Activated B cell treated with CpG ODN at 0.5 μM for 24 hours (primary cell): ENCODE measurements at regions of chr3 and their contacts with region 1.

Region 1: GRCh38 chr3:49120438-49121131 is at the start of gene USP19:
- DNase-seq: peak; percentile 95
- ATAC-seq: peak; percentile 93
- H3K4me3 Mint-ChIP-seq: peak within 1 kb of the TSS; percentile 84
- H3K27ac Mint-ChIP-seq: peak within 1 kb of the TSS; percentile 79
- H3K4me1 Mint-ChIP-seq: peaks cover 17% of the 10 kb centered on the region
- H3K27me3 Mint-ChIP-seq: no peaks in the 10 kb centered on the region
- CTCF ChIP-seq: no peak
- total RNA-seq, gene USP19: 62.0 and 75.3 TPM in 2 replicates

Region 2: GRCh38 chr3:48588230-48588629 is 532.4 kb before region 1 on chr3:
- CTCF ChIA-PET with region 1: no interaction called
- POLR2A ChIA-PET with region 1: no interaction called
- intact Hi-C with region 1: no loop called
- DNase-seq: no peak
- ATAC-seq: no peak
- H3K4me3 Mint-ChIP-seq: no peak overlapping the region
- H3K27ac Mint-ChIP-seq: no peak overlapping the region
- H3K4me1 Mint-ChIP-seq: no peaks in the 10 kb centered on the region
- H3K27me3 Mint-ChIP-seq: peaks cover 37% of the 10 kb centered on the region
- CTCF ChIP-seq: no peak

Region 3: DNA sequence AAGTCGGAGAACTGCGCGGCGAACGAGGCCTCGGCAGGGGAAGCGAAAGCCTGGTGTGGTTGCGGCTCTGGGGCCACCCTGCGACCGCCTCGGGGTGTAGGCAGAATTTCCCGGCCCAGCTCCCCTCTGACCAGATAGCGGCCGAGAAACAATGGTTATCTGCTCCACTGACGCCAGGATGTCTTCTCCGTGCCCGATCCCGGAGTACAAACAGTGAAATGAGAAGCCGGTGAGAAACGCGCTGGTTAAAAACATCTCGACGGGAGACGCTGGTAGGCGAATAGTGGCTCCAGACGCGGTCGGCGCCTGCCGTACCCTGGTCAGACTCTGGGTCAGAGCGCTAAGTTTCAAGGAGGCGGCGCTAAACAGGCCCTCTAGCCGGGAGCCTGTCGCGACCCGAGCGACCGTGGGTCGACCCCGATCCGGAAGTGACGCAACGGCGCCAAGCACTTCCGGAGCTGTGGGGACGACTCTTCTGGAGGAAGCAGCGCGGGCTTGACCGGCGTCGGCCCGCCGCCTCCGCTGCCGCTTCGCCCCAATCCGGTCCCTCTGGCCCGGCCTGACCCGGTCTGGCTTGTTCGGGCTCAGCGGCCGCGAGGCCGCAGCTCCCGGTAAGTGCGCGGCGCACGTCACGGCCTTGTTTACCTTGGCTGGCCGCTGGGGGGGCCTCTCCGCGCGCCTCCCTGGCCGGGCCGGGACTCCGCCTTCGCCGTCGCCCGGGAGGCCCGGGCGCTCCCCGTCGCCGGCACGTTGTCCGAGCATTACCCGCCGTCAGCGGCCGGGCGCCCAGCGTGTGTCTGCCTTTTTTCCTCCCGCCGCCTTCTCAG is 202.0 kb before region 1 on chr3 and contains the start of gene ARIH2:
- CTCF ChIA-PET with region 1: no interaction called
- POLR2A ChIA-PET with region 1: interaction called, 3 read pairs
- intact Hi-C with region 1: loop called (anchors 1 kb)
- DNase-seq: peak; percentile 91
- ATAC-seq: peak; percentile 85
- H3K4me3 Mint-ChIP-seq: peak within 1 kb of the TSS; percentile 99
- H3K27ac Mint-ChIP-seq: peak within 1 kb of the TSS; percentile 98
- H3K4me1 Mint-ChIP-seq: peaks cover 32% of the 10 kb centered on the region
- H3K27me3 Mint-ChIP-seq: no peaks in the 10 kb centered on the region
- CTCF ChIP-seq: no peak
- total RNA-seq, gene ARIH2: 96.6 and 112 TPM in 2 replicates

Region 4: DNA sequence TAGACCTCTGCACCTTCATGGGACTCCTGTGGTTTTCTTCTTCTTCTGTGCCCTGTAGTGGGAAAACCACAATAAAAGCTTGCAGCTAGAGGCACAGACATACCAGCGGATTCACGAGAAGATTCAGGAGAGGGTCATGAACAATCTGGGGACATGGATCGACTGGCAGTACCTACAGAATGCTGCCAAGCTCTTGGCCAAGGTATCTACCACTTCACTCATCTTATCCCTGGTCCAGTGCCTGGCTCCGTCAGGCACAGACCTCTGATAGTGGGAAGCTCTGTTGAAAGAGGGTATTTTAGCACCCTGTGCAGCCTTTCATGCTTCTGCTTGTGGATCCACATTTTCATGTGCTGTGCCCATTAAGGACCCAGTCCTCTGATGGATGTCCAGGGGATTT is 140.3 kb before region 1 on chr3:
- CTCF ChIA-PET with region 1: no interaction called
- POLR2A ChIA-PET with region 1: no interaction called
- intact Hi-C with region 1: no loop called
- DNase-seq: no peak
- ATAC-seq: no peak
- H3K4me3 Mint-ChIP-seq: no peak overlapping the region
- H3K27ac Mint-ChIP-seq: no peak overlapping the region
- H3K4me1 Mint-ChIP-seq: no peaks in the 10 kb centered on the region
- H3K27me3 Mint-ChIP-seq: no peaks in the 10 kb centered on the region
- CTCF ChIP-seq: no peak

Region 5: DNA sequence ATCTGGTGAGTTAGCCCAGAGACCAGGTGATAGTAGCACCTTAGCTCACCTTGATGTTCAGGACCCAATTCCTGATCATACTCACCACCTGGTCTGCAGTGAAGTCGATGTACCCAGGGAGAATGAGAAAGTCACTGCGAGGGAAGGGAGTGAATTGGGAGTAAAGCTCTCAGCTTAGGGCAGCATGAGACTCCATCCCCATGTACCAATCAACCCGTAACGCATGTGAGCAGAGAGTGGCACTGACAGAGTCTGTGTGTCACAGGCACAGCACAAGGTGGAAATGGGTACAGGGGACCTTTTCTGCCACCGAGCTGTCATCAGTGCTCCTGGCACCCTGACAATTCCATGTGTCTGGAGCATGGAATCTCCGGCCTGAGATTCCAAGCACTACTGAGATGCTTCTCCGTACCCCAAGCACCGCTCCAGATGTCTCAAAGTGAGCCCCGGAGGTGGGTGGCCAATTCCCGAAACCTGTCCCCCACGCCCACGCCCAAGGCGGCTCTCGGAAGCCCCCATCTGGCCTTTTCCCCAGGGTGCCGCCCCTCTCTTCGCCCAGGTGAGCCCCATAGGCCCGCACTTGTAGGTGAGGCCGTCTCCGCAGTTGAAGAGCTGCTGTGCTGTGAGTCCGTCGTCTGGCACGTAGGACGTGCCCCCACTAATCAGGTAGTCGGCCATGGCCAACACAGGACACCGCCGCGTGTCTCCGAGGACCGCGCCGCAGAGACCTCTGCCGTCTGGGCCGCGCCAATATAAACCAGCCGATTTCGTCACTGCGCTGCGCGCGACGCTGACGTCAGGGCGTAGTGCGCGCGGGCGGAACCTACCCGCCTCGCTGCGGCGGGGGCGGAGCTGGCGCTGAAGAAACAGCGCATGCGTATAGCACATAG is 91.7 kb before region 1 on chr3 and contains the start of gene IMPDH2:
- CTCF ChIA-PET with region 1: no interaction called
- POLR2A ChIA-PET with region 1: interaction called, 12 read pairs
- intact Hi-C with region 1: no loop called
- DNase-seq: peak; percentile 91
- ATAC-seq: peak; percentile 90
- H3K4me3 Mint-ChIP-seq: peak within 1 kb of the TSS; percentile 93
- H3K27ac Mint-ChIP-seq: peak within 1 kb of the TSS; percentile 94
- H3K4me1 Mint-ChIP-seq: peaks cover 49% of the 10 kb centered on the region
- H3K27me3 Mint-ChIP-seq: no peaks in the 10 kb centered on the region
- CTCF ChIP-seq: no peak
- total RNA-seq, gene IMPDH2: 387 and 414 TPM in 2 replicates

Region 6: DNA sequence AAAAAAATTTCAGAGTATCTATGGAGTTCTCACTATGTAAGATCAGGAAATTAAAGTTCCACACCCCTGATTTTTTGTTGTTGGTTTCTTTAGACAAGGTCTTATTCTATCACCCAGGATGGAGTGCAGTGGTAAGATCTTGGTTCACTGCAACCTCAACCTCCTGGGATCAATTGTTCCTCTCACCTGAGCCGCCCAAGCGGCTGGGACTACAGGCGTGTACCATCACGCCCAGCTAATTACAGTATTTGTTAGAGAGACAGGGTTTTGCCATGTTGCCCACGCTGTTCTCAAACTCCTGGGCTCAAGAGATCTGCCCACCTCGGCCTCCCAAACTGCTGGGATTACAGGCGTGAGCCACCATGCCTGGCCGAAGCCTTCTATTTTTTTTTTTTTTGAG is 39.2 kb before region 1 on chr3:
- CTCF ChIA-PET with region 1: no interaction called
- POLR2A ChIA-PET with region 1: no interaction called
- intact Hi-C with region 1: no loop called
- DNase-seq: no peak
- ATAC-seq: no peak
- H3K4me3 Mint-ChIP-seq: no peak overlapping the region
- H3K27ac Mint-ChIP-seq: no peak overlapping the region
- H3K4me1 Mint-ChIP-seq: peaks cover 12% of the 10 kb centered on the region
- H3K27me3 Mint-ChIP-seq: no peaks in the 10 kb centered on the region
- CTCF ChIP-seq: no peak

Region 7: DNA sequence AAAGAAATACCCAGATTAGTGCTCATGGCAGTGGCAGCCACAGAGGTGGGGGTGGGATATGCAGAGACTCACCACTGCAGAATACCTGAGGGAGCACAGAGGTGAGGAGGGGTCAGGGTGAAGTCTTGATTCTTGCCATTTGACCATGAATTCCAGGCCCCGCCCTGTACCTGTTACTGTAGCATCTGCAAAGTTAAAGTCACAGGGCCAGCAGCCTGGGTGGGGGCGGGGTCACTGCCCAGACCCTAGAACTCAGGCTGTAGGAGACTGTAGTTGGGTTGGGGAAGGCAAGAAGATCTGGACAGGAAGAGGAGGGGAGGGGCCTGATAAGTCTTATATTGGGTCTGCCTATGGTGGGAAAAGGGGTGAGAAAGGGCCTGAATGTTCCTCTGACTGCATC is 31.0 kb after region 1 on chr3:
- CTCF ChIA-PET with region 1: no interaction called
- POLR2A ChIA-PET with region 1: no interaction called
- intact Hi-C with region 1: no loop called
- DNase-seq: no peak
- ATAC-seq: no peak
- H3K4me3 Mint-ChIP-seq: no peak overlapping the region
- H3K27ac Mint-ChIP-seq: no peak overlapping the region
- H3K4me1 Mint-ChIP-seq: no peaks in the 10 kb centered on the region
- H3K27me3 Mint-ChIP-seq: no peaks in the 10 kb centered on the region
- CTCF ChIP-seq: no peak

Region 8: GRCh38 chr3:49165771-49166751 is 45.5 kb after region 1 on chr3 and contains the start of gene CCDC71:
- CTCF ChIA-PET with region 1: no interaction called
- POLR2A ChIA-PET with region 1: interaction called, 6 read pairs
- intact Hi-C with region 1: loop called (anchors 1 kb)
- DNase-seq: peak; percentile 74
- ATAC-seq: peak; percentile 83
- H3K4me3 Mint-ChIP-seq: peak within 1 kb of the TSS; percentile 92
- H3K27ac Mint-ChIP-seq: peak within 1 kb of the TSS; percentile 84
- H3K4me1 Mint-ChIP-seq: peaks cover 26% of the 10 kb centered on the region
- H3K27me3 Mint-ChIP-seq: peaks cover 2% of the 10 kb centered on the region
- CTCF ChIP-seq: no peak
- total RNA-seq, gene CCDC71: 28.3 and 28.9 TPM in 2 replicates

Region 9: DNA sequence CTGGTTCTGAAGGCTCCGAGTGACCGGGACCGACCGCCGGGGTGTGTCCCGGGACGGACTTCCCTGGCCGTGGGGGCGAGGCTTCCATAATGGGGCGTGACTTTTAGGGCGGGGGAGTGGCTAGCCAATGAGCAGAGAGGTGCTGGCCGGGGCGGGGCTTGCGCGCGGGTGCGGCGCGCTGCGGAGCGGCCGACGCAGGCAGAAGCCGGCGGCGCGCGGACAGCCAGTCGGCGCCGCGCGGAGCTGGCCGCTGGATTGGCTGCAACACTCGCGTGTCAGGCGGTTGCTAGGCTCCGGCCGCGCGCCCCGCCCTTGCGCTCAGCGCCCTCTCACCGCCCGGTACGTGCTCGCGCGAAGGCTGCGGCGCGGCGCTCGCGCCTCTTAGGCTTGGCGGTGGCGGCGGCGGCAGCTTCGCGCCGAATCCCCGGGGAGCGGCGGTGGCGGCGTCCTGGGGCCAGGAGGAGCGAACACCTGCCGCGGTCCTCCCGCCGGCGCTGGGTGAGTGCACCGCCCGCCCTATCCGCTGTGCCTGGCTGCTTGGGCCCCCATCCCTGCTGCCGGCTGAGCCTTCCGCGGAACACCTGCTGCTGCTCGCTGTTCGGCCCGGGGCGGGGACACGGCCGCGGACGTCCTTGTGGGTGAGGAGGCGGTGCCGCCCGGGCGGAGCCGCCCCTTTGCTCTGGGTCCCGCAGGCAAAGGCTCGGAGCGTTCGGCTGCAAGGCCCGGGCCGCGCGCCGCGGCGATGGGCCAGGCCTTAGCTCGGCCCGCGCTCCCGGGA is 349.5 kb after region 1 on chr3 and contains the start of gene DAG1:
- CTCF ChIA-PET with region 1: no interaction called
- POLR2A ChIA-PET with region 1: interaction called, 8 read pairs
- intact Hi-C with region 1: loop called (anchors 1 kb)
- DNase-seq: peak; percentile 97
- ATAC-seq: peak; percentile 87
- H3K4me3 Mint-ChIP-seq: peak within 1 kb of the TSS; percentile 91
- H3K27ac Mint-ChIP-seq: peak within 1 kb of the TSS; percentile 96
- H3K4me1 Mint-ChIP-seq: peaks cover 26% of the 10 kb centered on the region
- H3K27me3 Mint-ChIP-seq: no peaks in the 10 kb centered on the region
- CTCF ChIP-seq: no peak
- total RNA-seq, gene DAG1: 18.5 and 19.7 TPM in 2 replicates